Body of pancreas (tissue), 4 donors: ENCODE measurements at regions of chr11 and their contacts with region 1.

Region 1: GRCh38 chr11:17504330-17505107 is 27.9 kb upstream of the ABCC8 start:
- DNase-seq: peak; percentile 88 to 95 (median 90)
- ATAC-seq: peak; percentile 91
- H3K4me3 ChIP-seq: no peak overlapping the region
- H3K27ac ChIP-seq: no peak overlapping the region
- H3K4me1 ChIP-seq: no peaks in the 10 kb centered on the region
- H3K27me3 ChIP-seq: no peaks in the 10 kb centered on the region
- CTCF ChIP-seq: peak; percentile 90 to 98 (median 94)
- POLR2A ChIP-seq: no peak

Region 2: GRCh38 chr11:17224727-17225126 is 279.8 kb before region 1 on chr11:
- intact Hi-C with region 1: loop called (anchors 5 kb)
- DNase-seq: no peak
- ATAC-seq: no peak
- H3K4me3 ChIP-seq: no peak overlapping the region
- H3K27ac ChIP-seq: no peak overlapping the region
- H3K4me1 ChIP-seq: no peaks in the 10 kb centered on the region
- H3K27me3 ChIP-seq: no peaks in the 10 kb centered on the region
- CTCF ChIP-seq: no peak
- POLR2A ChIP-seq: no peak

Region 3: GRCh38 chr11:17384002-17384511 is 120.5 kb before region 1 on chr11:
- intact Hi-C with region 1: loop called (anchors 5 kb)
- DNase-seq: peak; percentile 78 to 87 (median 84)
- ATAC-seq: peak; percentile 60
- H3K4me3 ChIP-seq: no peak overlapping the region
- H3K27ac ChIP-seq: no peak overlapping the region
- H3K4me1 ChIP-seq: peaks cover 22% of the 10 kb centered on the region
- H3K27me3 ChIP-seq: no peaks in the 10 kb centered on the region
- CTCF ChIP-seq: peak; percentile 83 to 93 (median 91)
- POLR2A ChIP-seq: no peak